IMR-90 (cell line): ENCODE measurements at regions of chr1 and their contacts with region 1.

Region 1: GRCh38 chr1:60978421-60979357 is 103.7 kb upstream of the NFIA start:
- DNase-seq: peak; percentile 50
- ATAC-seq: peak; percentile 97
- H3K4me3 ChIP-seq: no peak overlapping the region
- H3K27ac ChIP-seq: no peak overlapping the region
- H3K4me1 ChIP-seq: no peaks in the 10 kb centered on the region
- H3K27me3 ChIP-seq: no peaks in the 10 kb centered on the region
- CTCF ChIP-seq: peak; percentile 72
- POLR2A ChIP-seq: no peak
- RAD21 ChIP-seq: peak; percentile 80

Region 2: DNA sequence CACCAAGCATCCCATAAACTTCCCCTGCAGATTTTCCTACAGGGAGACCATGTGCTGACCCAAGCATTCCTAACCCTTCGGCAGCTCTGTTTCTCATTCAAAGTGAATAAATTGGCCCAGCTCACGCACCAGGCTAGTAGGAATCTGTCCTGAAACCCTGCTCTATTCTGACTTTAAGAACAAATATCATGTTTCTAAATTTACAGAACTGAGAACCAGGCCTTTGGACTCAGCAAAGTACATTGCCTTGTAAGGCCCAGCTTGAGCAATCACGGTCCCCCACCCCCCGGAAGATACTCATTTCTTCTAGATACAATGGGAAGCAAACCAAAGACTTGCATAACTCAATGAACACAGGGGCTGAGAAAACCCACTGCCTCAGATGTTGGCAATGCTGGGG is 56.4 kb before region 1 on chr1:
- CTCF ChIA-PET with region 1: no interaction called
- POLR2A ChIA-PET with region 1: no interaction called
- dilution Hi-C with region 1: no loop called
- in situ Hi-C with region 1: no loop called
- intact Hi-C with region 1: no loop called
- DNase-seq: no peak
- ATAC-seq: no peak
- H3K4me3 ChIP-seq: no peak overlapping the region
- H3K27ac ChIP-seq: no peak overlapping the region
- H3K4me1 ChIP-seq: no peaks in the 10 kb centered on the region
- H3K27me3 ChIP-seq: no peaks in the 10 kb centered on the region
- CTCF ChIP-seq: no peak
- POLR2A ChIP-seq: no peak
- RAD21 ChIP-seq: no peak

Region 3: GRCh38 chr1:61043010-61043820 is 64.5 kb after region 1 on chr1:
- CTCF ChIA-PET with region 1: no interaction called
- POLR2A ChIA-PET with region 1: no interaction called
- dilution Hi-C with region 1: no loop called
- in situ Hi-C with region 1: no loop called
- intact Hi-C with region 1: loop called (anchors 2 kb)
- DNase-seq: peak; percentile 48
- ATAC-seq: peak; percentile 96
- H3K4me3 ChIP-seq: peak overlapping the region; percentile 30
- H3K27ac ChIP-seq: no peak overlapping the region
- H3K4me1 ChIP-seq: no peaks in the 10 kb centered on the region
- H3K27me3 ChIP-seq: peaks cover 17% of the 10 kb centered on the region
- CTCF ChIP-seq: peak; percentile 68
- POLR2A ChIP-seq: no peak
- RAD21 ChIP-seq: peak; percentile 74

Region 4: DNA sequence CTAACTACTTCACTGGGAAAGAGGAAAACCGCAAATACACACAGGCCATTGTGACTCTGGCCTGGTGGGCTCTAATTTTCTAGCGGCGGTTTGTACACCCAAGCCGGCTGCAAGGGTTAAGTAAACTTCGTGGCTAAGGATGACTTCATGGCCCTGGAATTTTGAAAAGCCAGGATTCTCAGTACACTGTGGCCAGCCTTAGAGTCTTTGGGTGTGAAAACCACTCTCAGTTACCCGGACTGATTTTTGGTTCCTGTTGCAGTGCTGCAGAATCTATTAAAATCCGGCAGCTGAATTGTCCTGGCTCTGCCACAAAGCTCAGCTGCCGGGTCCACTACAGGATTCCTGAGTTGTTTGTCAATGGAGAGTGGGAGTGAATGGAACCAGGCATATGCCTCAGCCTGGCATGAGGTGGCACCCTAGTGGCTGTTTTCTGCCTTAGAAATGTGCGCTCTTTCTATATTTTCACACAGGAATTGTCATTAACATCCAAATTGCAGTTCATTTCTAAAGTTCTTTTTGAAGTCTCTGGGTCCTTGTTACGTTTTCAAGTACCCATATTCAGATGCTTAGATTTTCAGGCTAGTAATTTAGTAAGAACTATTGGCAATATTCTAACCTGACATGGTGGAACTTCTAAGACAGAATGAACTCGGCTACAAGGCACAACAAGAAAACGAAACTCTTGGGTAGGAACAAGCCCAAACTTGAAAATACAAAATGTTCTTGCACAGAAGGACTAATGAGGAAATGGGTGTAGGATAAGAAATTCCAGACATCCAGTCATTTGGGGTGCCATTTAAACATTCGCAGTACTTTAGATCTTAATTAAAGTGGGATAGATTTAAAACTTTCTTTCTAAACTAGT is 359.5 kb after region 1 on chr1:
- CTCF ChIA-PET with region 1: no interaction called
- POLR2A ChIA-PET with region 1: no interaction called
- dilution Hi-C with region 1: no loop called
- in situ Hi-C with region 1: no loop called
- intact Hi-C with region 1: loop called (anchors 2 kb)
- DNase-seq: peak; percentile 75
- ATAC-seq: peak; percentile 94
- H3K4me3 ChIP-seq: no peak overlapping the region
- H3K27ac ChIP-seq: peak overlapping the region; percentile 6; the same call in 1 of the 2 replicates
- H3K4me1 ChIP-seq: no peaks in the 10 kb centered on the region
- H3K27me3 ChIP-seq: peaks cover 29% of the 10 kb centered on the region
- CTCF ChIP-seq: peak; percentile 60
- POLR2A ChIP-seq: no peak
- RAD21 ChIP-seq: peak; percentile 66

Region 5: GRCh38 chr1:61588736-61589672 is 610.3 kb after region 1 on chr1:
- CTCF ChIA-PET with region 1: no interaction called
- POLR2A ChIA-PET with region 1: no interaction called
- dilution Hi-C with region 1: no loop called
- in situ Hi-C with region 1: no loop called
- intact Hi-C with region 1: loop called (anchors 2 kb)
- DNase-seq: peak; percentile 36
- ATAC-seq: peak; percentile 85
- H3K4me3 ChIP-seq: no peak overlapping the region
- H3K27ac ChIP-seq: no peak overlapping the region
- H3K4me1 ChIP-seq: no peaks in the 10 kb centered on the region
- H3K27me3 ChIP-seq: no peaks in the 10 kb centered on the region; the same call in 1 of the 2 replicates
- CTCF ChIP-seq: peak; percentile 63
- POLR2A ChIP-seq: no peak
- RAD21 ChIP-seq: peak; percentile 63

Region 6: DNA sequence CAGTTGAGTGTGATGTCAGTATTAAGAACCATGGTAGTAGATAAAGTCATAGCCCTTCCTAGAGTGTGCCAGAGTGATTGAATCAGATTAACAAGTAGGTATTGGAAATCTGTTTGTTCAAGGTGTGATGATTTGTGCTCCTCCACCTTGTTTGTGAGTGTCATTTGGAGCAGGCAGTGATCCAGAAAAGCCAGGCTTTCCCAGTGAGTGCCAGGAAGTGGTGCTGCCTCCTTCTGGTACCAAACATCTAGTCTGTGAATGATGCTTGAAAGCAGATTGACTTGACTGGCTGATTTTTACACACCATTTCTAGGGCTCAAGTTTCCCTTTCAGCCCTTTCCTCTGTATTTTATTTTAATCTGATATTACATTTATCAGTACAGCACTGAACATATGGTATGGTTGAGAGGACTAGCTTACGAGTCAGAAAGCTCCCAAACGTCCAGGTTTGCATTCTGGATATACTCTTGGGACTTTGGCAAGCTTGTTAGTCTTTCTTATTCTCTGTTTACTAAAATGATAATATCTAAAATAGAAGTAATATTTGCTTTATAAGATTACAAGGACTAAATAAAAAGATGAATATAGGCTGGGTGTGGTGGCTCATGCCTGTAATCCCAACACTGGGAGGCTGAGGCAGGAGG is 864.3 kb after region 1 on chr1:
- CTCF ChIA-PET with region 1: no interaction called
- POLR2A ChIA-PET with region 1: no interaction called
- dilution Hi-C with region 1: no loop called
- in situ Hi-C with region 1: loop called (anchors 10 kb)
- intact Hi-C with region 1: no loop called
- DNase-seq: no peak
- ATAC-seq: no peak
- H3K4me3 ChIP-seq: no peak overlapping the region
- H3K27ac ChIP-seq: no peak overlapping the region
- H3K4me1 ChIP-seq: peaks cover 8% of the 10 kb centered on the region
- H3K27me3 ChIP-seq: no peaks in the 10 kb centered on the region
- CTCF ChIP-seq: 0 out of 2 replicates have a peak, but pooled peaks have one; percentile 18
- POLR2A ChIP-seq: no peak
- RAD21 ChIP-seq: no peak